Activated CD4-positive, alpha-beta T cell treated with anti-CD3 and anti-CD28 coated beads, Interleukin-2, amount 10 ng/mL, durations not matched to agents 24 days and 14 days (primary cell): ENCODE measurements at regions of chr15 and their contacts with region 1.

Region 1: GRCh38 chr15:55290528-55291057 is 980 bp upstream of the RAB27A start:
- DNase-seq: peak; percentile 95
- H3K4me3 Mint-ChIP-seq: peak overlapping the region; percentile 95
- H3K27ac Mint-ChIP-seq: peak overlapping the region; percentile 90
- H3K4me1 Mint-ChIP-seq: peaks cover 34% of the 10 kb centered on the region
- H3K27me3 Mint-ChIP-seq: no peaks in the 10 kb centered on the region

Region 2: GRCh38 chr15:55196458-55197361 is 93.9 kb before region 1 on chr15 and contains the start of gene RSL24D1:
- intact Hi-C with region 1: loop called (anchors 1 kb)
- DNase-seq: peak; percentile 99
- H3K4me3 Mint-ChIP-seq: no peak within 1 kb of the TSS
- H3K27ac Mint-ChIP-seq: no peak within 1 kb of the TSS
- H3K4me1 Mint-ChIP-seq: peaks cover 14% of the 10 kb centered on the region
- H3K27me3 Mint-ChIP-seq: no peaks in the 10 kb centered on the region
- total RNA-seq, gene RSL24D1: 121 TPM in 2 replicates

Region 3: DNA sequence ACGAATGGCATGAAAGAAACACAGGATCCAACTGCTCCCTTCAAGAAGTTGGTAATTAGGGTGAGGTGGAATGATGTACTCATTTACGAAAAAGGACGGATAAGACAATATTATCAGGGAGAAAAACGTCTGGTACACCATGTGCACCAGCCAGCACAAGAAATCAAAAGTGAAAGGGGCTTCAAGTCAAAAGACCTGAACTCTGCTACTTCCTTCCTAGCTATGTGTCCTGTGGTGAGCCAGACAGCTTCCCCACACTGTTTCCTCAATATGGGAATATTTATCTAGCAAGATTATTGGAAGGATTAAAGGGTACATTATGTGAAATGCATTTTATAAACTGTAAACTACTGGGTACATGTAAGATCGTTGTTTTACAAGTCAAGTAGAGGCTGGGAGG is 34.9 kb before region 1 on chr15:
- intact Hi-C with region 1: loop called (anchors 2 kb)
- DNase-seq: peak; percentile 75
- H3K4me3 Mint-ChIP-seq: peak overlapping the region; percentile 76
- H3K27ac Mint-ChIP-seq: peak overlapping the region; percentile 71
- H3K4me1 Mint-ChIP-seq: peaks cover 68% of the 10 kb centered on the region
- H3K27me3 Mint-ChIP-seq: no peaks in the 10 kb centered on the region

Region 4: GRCh38 chr15:55279746-55280351 is 10.7 kb before region 1 on chr15:
- intact Hi-C with region 1: loop called (anchors 1 kb)
- DNase-seq: peak; percentile 85
- H3K4me3 Mint-ChIP-seq: peak overlapping the region; percentile 75
- H3K27ac Mint-ChIP-seq: peak overlapping the region; percentile 95
- H3K4me1 Mint-ChIP-seq: peaks cover 79% of the 10 kb centered on the region
- H3K27me3 Mint-ChIP-seq: no peaks in the 10 kb centered on the region

Region 5: GRCh38 chr15:55434989-55435825 is 144.6 kb after region 1 on chr15:
- intact Hi-C with region 1: loop called (anchors 5 kb)
- DNase-seq: peak; percentile 77
- H3K4me3 Mint-ChIP-seq: no peak overlapping the region
- H3K27ac Mint-ChIP-seq: no peak overlapping the region
- H3K4me1 Mint-ChIP-seq: peaks cover 4% of the 10 kb centered on the region
- H3K27me3 Mint-ChIP-seq: peaks cover 5% of the 10 kb centered on the region